ENCODE measurements at regions of chr4 and their contacts with region 1.

Region 1: GRCh38 chr4:37452952-37453280 is 208.4 kb downstream of the NWD2 start:
- DNase-seq: peak; percentile 55
- H3K4me3 Mint-ChIP-seq: peak overlapping the region; percentile 52
- H3K27ac Mint-ChIP-seq: no peak overlapping the region
- H3K4me1 Mint-ChIP-seq: peaks cover 12% of the 10 kb centered on the region
- H3K27me3 Mint-ChIP-seq: peaks cover 33% of the 10 kb centered on the region

Region 2: DNA sequence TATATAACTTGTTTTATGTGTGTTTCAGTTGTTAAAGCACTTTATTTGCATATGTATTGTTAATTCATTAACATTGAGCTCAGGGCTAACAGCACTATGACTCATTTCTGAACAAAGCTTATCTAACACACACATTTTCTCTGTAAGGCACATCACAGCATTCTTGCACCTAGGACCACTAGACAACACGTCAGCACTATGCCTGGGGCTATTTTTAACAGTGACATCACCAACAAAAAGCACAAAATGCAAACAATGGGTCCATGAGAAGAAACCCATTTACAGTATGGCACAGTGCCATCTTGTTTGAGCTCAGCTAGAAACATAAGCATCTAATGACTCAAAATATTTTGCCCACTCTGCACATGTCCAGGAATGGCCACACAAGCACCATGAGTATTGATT is 108.9 kb after region 1 on chr4:
- CTCF ChIA-PET with region 1: interaction called, 39 read pairs
- POLR2A ChIA-PET with region 1: interaction called, 3 read pairs
- intact Hi-C with region 1: loop called (anchors 1 kb)
- DNase-seq: no peak
- H3K4me3 Mint-ChIP-seq: no peak overlapping the region
- H3K27ac Mint-ChIP-seq: no peak overlapping the region
- H3K4me1 Mint-ChIP-seq: no peaks in the 10 kb centered on the region
- H3K27me3 Mint-ChIP-seq: no peaks in the 10 kb centered on the region

Region 3: GRCh38 chr4:37567841-37568240 is 114.9 kb after region 1 on chr4:
- CTCF ChIA-PET with region 1: interaction called, 39 read pairs
- POLR2A ChIA-PET with region 1: interaction called, 3 read pairs
- intact Hi-C with region 1: loop called (anchors 1 kb)
- DNase-seq: no peak
- H3K4me3 Mint-ChIP-seq: no peak overlapping the region
- H3K27ac Mint-ChIP-seq: no peak overlapping the region
- H3K4me1 Mint-ChIP-seq: no peaks in the 10 kb centered on the region
- H3K27me3 Mint-ChIP-seq: no peaks in the 10 kb centered on the region

Region 4: GRCh38 chr4:37780444-37781150 is 327.7 kb after region 1 on chr4:
- CTCF ChIA-PET with region 1: interaction called, 3 read pairs
- POLR2A ChIA-PET with region 1: no interaction called
- intact Hi-C with region 1: loop called (anchors 2 kb)
- DNase-seq: peak; percentile 64
- H3K4me3 Mint-ChIP-seq: no peak overlapping the region
- H3K27ac Mint-ChIP-seq: peak overlapping the region; percentile 39
- H3K4me1 Mint-ChIP-seq: peaks cover 17% of the 10 kb centered on the region
- H3K27me3 Mint-ChIP-seq: peaks cover 1% of the 10 kb centered on the region

Region 5: DNA sequence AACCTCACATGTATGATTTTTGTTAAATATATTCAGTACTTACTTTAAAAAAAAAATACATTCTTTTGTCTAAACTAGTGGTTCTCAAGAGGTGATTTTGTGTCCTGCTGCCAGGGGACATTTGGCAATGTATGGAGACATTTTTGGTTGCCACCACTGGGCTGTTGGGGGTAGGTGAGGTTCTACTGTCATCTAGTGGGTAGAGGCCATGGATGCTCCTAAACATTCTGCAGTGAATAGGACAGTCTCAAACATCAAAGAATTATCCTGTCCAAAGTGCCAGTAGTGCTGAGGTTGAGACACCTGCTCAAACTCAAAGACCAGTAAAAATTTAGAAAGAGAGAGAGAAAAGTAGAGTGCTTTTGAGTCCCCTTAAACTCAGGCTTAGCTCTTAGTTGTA is 340.6 kb after region 1 on chr4:
- CTCF ChIA-PET with region 1: no interaction called
- POLR2A ChIA-PET with region 1: no interaction called
- intact Hi-C with region 1: loop called (anchors 2 kb)
- DNase-seq: peak; percentile 12
- H3K4me3 Mint-ChIP-seq: no peak overlapping the region
- H3K27ac Mint-ChIP-seq: no peak overlapping the region
- H3K4me1 Mint-ChIP-seq: no peaks in the 10 kb centered on the region
- H3K27me3 Mint-ChIP-seq: peaks cover under 1% of the 10 kb centered on the region

Region 6: GRCh38 chr4:38034986-38035882 is 582.3 kb after region 1 on chr4:
- CTCF ChIA-PET with region 1: no interaction called
- POLR2A ChIA-PET with region 1: no interaction called
- intact Hi-C with region 1: loop called (anchors 10 kb)
- DNase-seq: no peak
- H3K4me3 Mint-ChIP-seq: no peak overlapping the region
- H3K27ac Mint-ChIP-seq: no peak overlapping the region
- H3K4me1 Mint-ChIP-seq: no peaks in the 10 kb centered on the region
- H3K27me3 Mint-ChIP-seq: no peaks in the 10 kb centered on the region

Measured in activated CD4-positive, alpha-beta memory T cell treated with anti-CD3 and anti-CD28 coated beads for 36 hours (primary cell).